Posterior vena cava (tissue), 2 donors: ENCODE measurements at regions of chr1 and their contacts with region 1.

Region 1: GRCh38 chr1:70809069-70809468 is 238.5 kb downstream of the PTGER3 start:
- DNase-seq: no peak

Region 2: GRCh38 chr1:70348399-70349165 is 460.5 kb before region 1 on chr1:
- intact Hi-C with region 1: no loop called
- DNase-seq: no peak

Region 3: GRCh38 chr1:70779571-70779970 is 29.5 kb before region 1 on chr1:
- intact Hi-C with region 1: loop called in 1 of 2 experiments (anchors 2 kb)
- DNase-seq: no peak

Region 4: DNA sequence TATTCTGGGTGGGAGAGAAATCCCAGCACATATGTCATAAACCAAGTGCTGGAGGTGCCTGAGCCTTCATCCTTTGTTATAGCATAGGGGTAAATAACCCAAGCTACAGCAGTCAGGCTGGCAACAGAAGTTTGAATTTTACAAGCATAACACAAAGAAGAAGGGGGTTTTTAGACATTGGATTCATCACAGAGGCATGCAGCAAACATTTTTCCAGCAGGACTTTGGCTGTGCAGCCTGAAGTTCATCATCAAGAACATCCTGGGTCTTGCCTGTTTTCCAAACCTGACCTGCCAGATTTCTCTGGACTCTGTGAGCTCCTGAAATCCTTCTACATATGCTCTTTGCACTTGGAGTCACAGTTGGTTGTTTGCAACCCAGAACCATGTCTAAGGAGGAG is 222.4 kb after region 1 on chr1:
- intact Hi-C with region 1: no loop called
- DNase-seq: no peak